ENCODE measurements at regions of chr17 and their contacts with region 1.

Region 1: DNA sequence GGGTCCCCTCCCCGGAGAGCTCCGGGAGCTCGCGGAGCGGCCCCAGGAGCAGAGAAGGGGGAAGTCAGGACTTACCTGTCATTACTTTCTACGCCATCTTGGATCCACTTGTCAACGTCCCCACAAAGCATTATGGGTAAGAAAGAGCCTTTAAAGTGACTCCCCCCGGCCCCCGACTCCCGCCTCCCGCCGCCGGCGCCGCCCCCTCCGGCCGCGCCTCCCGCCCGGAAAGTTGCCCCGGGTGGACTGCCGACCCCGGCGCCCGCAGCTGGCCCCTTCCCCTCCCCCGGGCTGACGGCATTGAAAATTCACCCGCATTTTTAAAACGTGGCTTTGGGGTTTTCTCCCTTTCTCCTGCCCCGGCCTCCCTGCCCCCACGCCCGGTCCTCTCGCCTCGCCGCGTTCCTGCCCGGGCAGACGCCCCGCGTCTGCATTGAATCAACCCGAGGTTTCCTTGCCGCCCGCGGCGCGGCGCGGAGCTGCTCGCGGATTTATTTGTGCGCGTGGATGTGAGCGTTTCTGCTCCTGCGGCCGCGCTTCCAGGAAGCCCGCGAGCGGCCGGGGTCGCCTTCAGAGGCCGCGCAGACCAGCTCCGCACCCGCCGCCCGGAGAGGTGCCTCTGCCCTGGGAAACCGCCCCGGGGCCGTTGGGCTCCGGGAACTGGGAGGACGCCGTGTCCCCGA is at the start of gene HELZ:
- DNase-seq: peak; percentile 87
- ATAC-seq: peak; percentile 85
- H3K4me3 ChIP-seq: peak within 1 kb of the TSS; percentile 71 to 94 (median 90)
- H3K4me3 Mint-ChIP-seq: peak within 1 kb of the TSS; percentile 87
- H3K27ac ChIP-seq: peak within 1 kb of the TSS; percentile 52 to 89
- H3K27ac Mint-ChIP-seq: peak within 1 kb of the TSS; percentile 88
- H3K4me1 ChIP-seq: peaks cover 21 to 23% of the 10 kb centered on the region in 2 donors
- H3K4me1 Mint-ChIP-seq: peaks cover 44% of the 10 kb centered on the region
- H3K27me3 ChIP-seq: peaks cover 0 to 9% (median 0%) of the 10 kb centered on the region in 4 experiments
- H3K27me3 Mint-ChIP-seq: peaks cover 4% of the 10 kb centered on the region
- CTCF ChIP-seq: no peak
- total RNA-seq, gene HELZ: 89.9 and 97.8 TPM in 2 replicates

Region 2: GRCh38 chr17:66426397-66427033 is 818.7 kb before region 1 on chr17:
- CTCF ChIA-PET with region 1: no interaction called
- POLR2A ChIA-PET with region 1: no interaction called
- intact Hi-C with region 1: no loop called
- DNase-seq: no peak
- ATAC-seq: no peak
- H3K4me3 ChIP-seq: no peak overlapping the region
- H3K4me3 Mint-ChIP-seq: no peak overlapping the region
- H3K27ac ChIP-seq: no peak overlapping the region
- H3K27ac Mint-ChIP-seq: no peak overlapping the region
- H3K4me1 ChIP-seq: no peaks in the 10 kb centered on the region
- H3K4me1 Mint-ChIP-seq: no peaks in the 10 kb centered on the region
- H3K27me3 ChIP-seq: peaks cover 0 to 2% (median 0%) of the 10 kb centered on the region in 4 experiments
- H3K27me3 Mint-ChIP-seq: peaks cover 9% of the 10 kb centered on the region
- CTCF ChIP-seq: no peak

Region 3: GRCh38 chr17:67366193-67367157 is 121.3 kb after region 1 on chr17 and contains the start of gene PSMD12:
- CTCF ChIA-PET with region 1: no interaction called
- POLR2A ChIA-PET with region 1: no interaction called
- intact Hi-C with region 1: loop called (anchors 2 kb)
- DNase-seq: peak; percentile 92
- ATAC-seq: peak; percentile 99
- H3K4me3 ChIP-seq: peak within 1 kb of the TSS; percentile 83 to 97 (median 94)
- H3K4me3 Mint-ChIP-seq: peak within 1 kb of the TSS; percentile 98
- H3K27ac ChIP-seq: peak within 1 kb of the TSS; percentile 85
- H3K27ac Mint-ChIP-seq: peak within 1 kb of the TSS; percentile 97
- H3K4me1 ChIP-seq: peaks cover 21 to 22% of the 10 kb centered on the region in 2 donors
- H3K4me1 Mint-ChIP-seq: peaks cover 38% of the 10 kb centered on the region
- H3K27me3 ChIP-seq: no peaks in the 10 kb centered on the region
- H3K27me3 Mint-ChIP-seq: no peaks in the 10 kb centered on the region
- CTCF ChIP-seq: no peak
- total RNA-seq, gene PSMD12: 36.5 and 36.7 TPM in 2 replicates